Left cardiac atrium (tissue), 4 donors: ENCODE measurements at regions of chr14 and their contacts with region 1.

Region 1: DNA sequence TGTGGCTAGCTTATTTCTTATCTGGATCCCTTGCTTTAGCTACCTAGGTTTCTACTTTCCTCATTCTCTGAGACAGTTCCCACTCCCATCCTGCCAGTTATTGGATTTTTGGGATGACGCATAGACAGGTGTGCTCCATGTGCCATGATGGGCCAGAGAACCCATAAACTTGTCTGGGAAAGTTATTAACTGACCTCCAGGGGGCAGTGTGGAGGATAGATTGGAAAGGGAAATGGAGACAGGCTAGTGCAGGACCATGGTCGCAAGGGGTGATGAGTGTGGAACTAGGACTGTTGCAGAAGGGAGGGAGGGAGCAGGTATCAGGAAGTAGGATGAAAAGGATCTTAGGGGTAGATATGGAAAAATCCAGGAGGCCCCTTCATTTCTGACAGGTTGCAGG is 80.3 kb downstream of the ESRRB start:
- DNase-seq: no peak
- ATAC-seq: peak; percentile 50 to 59

Region 2: DNA sequence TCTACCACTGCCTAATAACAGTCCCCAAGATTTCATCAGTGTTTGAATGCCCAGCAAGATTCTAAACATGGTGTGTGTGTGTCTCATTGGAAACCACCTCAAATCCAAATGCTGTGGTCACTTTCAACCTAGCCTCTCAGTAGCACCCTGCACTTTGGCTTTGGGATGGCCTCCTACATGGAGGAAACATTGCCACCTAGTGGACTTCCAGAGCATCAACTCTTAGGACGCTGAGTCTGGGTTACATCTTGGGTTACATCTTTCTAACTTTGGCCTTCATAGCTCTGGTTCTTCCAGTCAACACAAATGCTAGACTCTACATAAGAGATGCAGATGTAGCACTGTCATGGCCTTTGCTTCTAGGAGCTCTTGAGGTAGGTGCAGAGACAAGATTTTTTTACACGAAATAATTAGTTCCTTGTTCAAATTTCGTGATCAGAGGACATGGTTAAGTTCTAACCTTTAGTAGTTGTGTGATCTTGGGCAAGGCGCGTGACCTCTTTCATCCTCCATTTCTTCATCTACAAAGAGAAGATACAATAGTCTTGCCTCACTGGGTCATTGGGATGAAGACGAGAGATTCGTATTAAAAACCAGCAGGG is 191.6 kb after region 1 on chr14:
- intact Hi-C with region 1: loop called (anchors 5 to 10 kb)
- DNase-seq: no peak
- ATAC-seq: peak; percentile 46 to 72